ENCODE measurements at regions of chr11 and their contacts with region 1.

Region 1: DNA sequence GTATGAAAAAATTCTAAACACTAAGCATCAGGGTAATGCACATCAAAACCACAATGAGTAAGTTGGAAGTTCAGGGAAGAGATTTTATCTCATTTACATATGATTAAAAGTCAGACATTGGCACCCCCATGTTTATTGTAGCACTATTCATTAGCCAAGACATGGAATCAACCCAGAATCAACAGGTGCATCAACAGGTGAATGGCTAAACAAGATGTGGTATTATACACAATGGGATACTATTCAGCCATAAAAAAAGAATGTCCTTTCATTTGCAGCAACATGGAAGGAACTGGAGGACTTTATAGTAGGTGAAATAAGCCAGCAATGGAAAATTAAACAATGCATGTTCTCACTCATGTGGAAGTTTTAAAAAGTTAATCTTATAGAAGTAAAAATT is 17.6 kb upstream of the TTC17 start:
- DNase-seq: no peak
- ATAC-seq: no peak
- H3K4me3 ChIP-seq: no peak overlapping the region
- H3K4me3 Mint-ChIP-seq: no peak overlapping the region
- H3K27ac ChIP-seq: no peak overlapping the region
- H3K27ac Mint-ChIP-seq: no peak overlapping the region
- H3K4me1 ChIP-seq: no peaks in the 10 kb centered on the region
- H3K4me1 Mint-ChIP-seq: no peaks in the 10 kb centered on the region
- H3K27me3 ChIP-seq: no peaks in the 10 kb centered on the region
- H3K27me3 Mint-ChIP-seq: no peaks in the 10 kb centered on the region
- CTCF ChIP-seq: no peak

Region 2: GRCh38 chr11:43327987-43328386 is 13.2 kb before region 1 on chr11:
- CTCF ChIA-PET with region 1: no interaction called
- POLR2A ChIA-PET with region 1: no interaction called
- intact Hi-C with region 1: loop called in 1 of 2 experiments (anchors 1 kb)
- DNase-seq: no peak
- ATAC-seq: no peak
- H3K4me3 ChIP-seq: no peak overlapping the region
- H3K4me3 Mint-ChIP-seq: no peak overlapping the region
- H3K27ac ChIP-seq: no peak overlapping the region
- H3K27ac Mint-ChIP-seq: no peak overlapping the region
- H3K4me1 ChIP-seq: no peaks in the 10 kb centered on the region
- H3K4me1 Mint-ChIP-seq: no peaks in the 10 kb centered on the region
- H3K27me3 ChIP-seq: no peaks in the 10 kb centered on the region
- H3K27me3 Mint-ChIP-seq: no peaks in the 10 kb centered on the region
- CTCF ChIP-seq: no peak

Region 3: DNA sequence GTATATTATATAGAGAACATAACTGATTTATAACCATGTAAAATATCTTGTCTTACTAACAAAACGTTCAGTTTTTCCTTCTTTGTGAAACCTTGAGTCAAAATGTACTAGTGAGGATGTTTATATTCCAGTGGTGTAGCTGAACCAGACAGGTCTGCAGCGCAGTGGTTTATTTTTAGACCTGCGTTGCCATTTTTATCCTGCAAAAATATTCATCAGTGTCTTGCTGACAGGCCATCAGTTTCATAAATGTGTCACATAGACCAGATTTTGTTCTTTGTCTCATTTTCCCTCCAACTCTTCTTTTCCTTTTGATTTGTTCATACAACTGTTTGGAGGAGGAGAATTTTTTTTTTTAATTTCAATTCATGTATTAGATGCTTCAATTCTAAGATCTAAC is 382.5 kb after region 1 on chr11:
- CTCF ChIA-PET with region 1: no interaction called
- POLR2A ChIA-PET with region 1: no interaction called
- intact Hi-C with region 1: no loop called
- DNase-seq: no peak
- ATAC-seq: no peak
- H3K4me3 ChIP-seq: no peak overlapping the region
- H3K4me3 Mint-ChIP-seq: no peak overlapping the region
- H3K27ac ChIP-seq: no peak overlapping the region
- H3K27ac Mint-ChIP-seq: no peak overlapping the region
- H3K4me1 ChIP-seq: no peaks in the 10 kb centered on the region
- H3K4me1 Mint-ChIP-seq: peaks cover 3% of the 10 kb centered on the region
- H3K27me3 ChIP-seq: no peaks in the 10 kb centered on the region
- H3K27me3 Mint-ChIP-seq: no peaks in the 10 kb centered on the region
- CTCF ChIP-seq: no peak

Measured in CD8-positive, alpha-beta T cell (primary cell).